ENCODE measurements at regions of chr12 and their contacts with region 1.

Region 1: DNA sequence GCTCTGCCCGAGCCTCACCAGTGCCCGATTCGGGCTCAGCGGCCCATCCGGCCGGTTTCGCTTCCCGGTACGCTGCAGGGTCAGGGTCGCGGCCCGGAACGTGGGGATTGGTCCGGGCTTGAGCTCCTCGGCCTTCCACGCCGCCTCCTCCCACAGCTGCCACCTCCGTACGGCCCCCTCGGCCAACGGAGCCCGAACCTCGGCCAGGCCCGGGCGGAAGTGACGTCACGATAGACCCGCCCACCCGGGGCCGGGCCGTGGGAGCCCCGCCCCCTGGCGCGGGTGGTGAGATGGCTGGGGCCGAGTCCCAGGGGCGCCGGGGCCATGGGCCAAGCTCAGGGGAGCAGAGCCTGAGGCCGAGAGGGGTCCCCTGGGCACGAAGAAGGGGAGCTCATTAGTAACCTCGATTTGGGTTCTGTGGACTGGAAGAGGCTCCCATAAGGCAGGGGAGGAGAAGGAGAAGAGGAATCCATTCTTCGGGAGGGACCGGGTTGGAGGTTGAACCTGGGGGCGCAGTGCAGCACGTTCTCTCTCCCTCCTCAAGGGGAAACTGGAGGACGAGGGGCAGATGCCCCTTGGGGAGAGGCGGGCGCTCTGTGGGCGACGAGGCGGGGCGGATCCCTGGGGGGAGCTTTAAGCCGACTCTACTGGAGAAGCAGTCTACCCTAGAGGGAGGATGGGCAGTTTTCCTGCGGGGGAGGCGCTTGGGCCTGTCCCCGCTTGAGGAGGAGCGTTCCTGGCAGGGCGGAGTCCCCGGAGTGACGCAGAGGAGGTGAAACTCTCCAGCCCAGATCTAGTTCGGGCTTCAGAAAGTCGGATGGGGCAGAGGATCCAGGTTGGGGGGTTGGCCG is at the start of gene MLF2:
- DNase-seq: peak; percentile 99
- H3K4me3 Mint-ChIP-seq: peak within 1 kb of the TSS; percentile 96
- H3K27ac Mint-ChIP-seq: peak within 1 kb of the TSS; percentile 97
- H3K4me1 Mint-ChIP-seq: peaks cover 25% of the 10 kb centered on the region
- H3K27me3 Mint-ChIP-seq: no peaks in the 10 kb centered on the region
- total RNA-seq, gene MLF2: 140 to 143 TPM

Region 2: DNA sequence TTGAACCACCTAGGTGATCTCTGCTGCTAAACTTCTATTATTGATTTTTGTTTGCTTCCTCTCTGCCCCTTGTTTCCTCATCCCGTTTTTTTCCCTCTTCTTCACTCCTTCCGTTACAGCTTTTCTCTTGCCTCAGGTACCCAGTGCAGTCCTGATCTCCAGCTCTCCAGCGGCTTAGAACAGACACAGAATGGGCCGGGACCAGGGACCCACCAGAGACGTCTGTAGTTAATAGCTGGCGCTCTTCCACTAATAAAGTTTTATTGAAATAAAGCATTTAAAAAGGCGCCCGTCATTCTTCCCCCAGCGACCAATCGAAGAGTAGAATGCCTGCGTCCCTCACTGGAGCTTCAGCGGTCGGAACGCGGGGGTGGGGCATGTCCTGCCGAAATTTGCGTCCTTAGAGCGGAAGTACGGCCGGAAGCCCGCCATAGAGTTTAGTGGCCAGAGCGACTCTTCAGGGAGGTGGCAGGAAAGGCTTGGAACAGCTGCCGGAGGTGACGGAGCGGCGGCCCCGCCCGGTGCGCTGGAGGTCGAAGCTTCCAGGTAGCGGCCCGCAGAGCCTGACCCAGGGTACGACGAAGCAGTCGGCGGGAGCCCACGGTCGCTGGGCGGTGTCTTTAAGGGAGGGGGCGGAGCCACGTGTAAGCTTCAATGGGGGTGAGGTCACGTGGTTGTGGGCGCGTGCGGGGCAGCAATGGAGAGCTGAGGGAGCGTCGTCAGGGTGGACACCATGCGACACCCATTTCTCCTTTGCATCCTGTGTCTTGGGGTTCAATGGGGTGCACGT is 29.3 kb before region 1 on chr12 and contains the start of gene COPS7A:
- CTCF ChIA-PET with region 1: interaction called, 11 read pairs
- intact Hi-C with region 1: loop called (anchors 1 kb)
- DNase-seq: peak; percentile 98
- H3K4me3 Mint-ChIP-seq: peak within 1 kb of the TSS; percentile 91
- H3K27ac Mint-ChIP-seq: peak within 1 kb of the TSS; percentile 89
- H3K4me1 Mint-ChIP-seq: peaks cover 25% of the 10 kb centered on the region
- H3K27me3 Mint-ChIP-seq: no peaks in the 10 kb centered on the region
- total RNA-seq, gene COPS7A: 43.0 to 47.8 TPM

Region 3: GRCh38 chr12:6772331-6772695 is 19.2 kb after region 1 on chr12 and contains the start of gene LAG3:
- CTCF ChIA-PET with region 1: interaction called, 118 read pairs
- intact Hi-C with region 1: no loop called
- DNase-seq: peak; percentile 80
- H3K4me3 Mint-ChIP-seq: peak within 1 kb of the TSS; percentile 83
- H3K27ac Mint-ChIP-seq: peak within 1 kb of the TSS; percentile 88
- H3K4me1 Mint-ChIP-seq: peaks cover 69% of the 10 kb centered on the region
- H3K27me3 Mint-ChIP-seq: peaks cover 14% of the 10 kb centered on the region
- total RNA-seq, gene LAG3: 22.8 to 25.1 TPM

Region 4: DNA sequence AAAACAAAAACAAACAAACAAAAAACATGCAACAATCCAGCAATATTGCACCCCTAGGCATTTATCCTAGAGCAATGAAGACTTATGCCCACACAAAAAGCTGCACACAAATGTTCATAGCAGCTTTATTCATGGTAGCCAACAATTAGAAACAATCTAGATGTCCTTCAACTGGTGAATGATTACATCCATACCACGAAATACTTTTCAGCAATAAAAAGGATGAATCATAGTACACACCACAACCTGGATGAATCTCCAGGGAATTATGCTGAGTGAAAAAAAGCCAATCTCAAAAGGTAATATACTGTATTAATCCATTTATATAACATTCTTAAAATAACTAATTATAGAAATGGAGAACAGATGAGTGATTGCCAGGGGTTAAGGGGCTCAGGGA is 54.0 kb after region 1 on chr12:
- CTCF ChIA-PET with region 1: interaction called, 11 read pairs
- intact Hi-C with region 1: no loop called
- DNase-seq: no peak
- H3K4me3 Mint-ChIP-seq: no peak overlapping the region
- H3K27ac Mint-ChIP-seq: no peak overlapping the region
- H3K4me1 Mint-ChIP-seq: peaks cover 19% of the 10 kb centered on the region
- H3K27me3 Mint-ChIP-seq: no peaks in the 10 kb centered on the region

Region 5: GRCh38 chr12:6833189-6833890 is 80.2 kb after region 1 on chr12:
- CTCF ChIA-PET with region 1: interaction called, 166 read pairs
- intact Hi-C with region 1: loop called (anchors 2 kb)
- DNase-seq: no peak
- H3K4me3 Mint-ChIP-seq: no peak overlapping the region
- H3K27ac Mint-ChIP-seq: no peak overlapping the region
- H3K4me1 Mint-ChIP-seq: peaks cover 10% of the 10 kb centered on the region
- H3K27me3 Mint-ChIP-seq: no peaks in the 10 kb centered on the region

Region 6: GRCh38 chr12:6890789-6891645 is 137.9 kb after region 1 on chr12:
- CTCF ChIA-PET with region 1: interaction called, 5 read pairs
- intact Hi-C with region 1: loop called (anchors 1 kb)
- DNase-seq: peak; percentile 100
- H3K4me3 Mint-ChIP-seq: peak overlapping the region; percentile 90
- H3K27ac Mint-ChIP-seq: peak overlapping the region; percentile 98
- H3K4me1 Mint-ChIP-seq: peaks cover 16% of the 10 kb centered on the region
- H3K27me3 Mint-ChIP-seq: no peaks in the 10 kb centered on the region